ENCODE measurements at regions of chr4 and their contacts with region 1.

Region 1: DNA sequence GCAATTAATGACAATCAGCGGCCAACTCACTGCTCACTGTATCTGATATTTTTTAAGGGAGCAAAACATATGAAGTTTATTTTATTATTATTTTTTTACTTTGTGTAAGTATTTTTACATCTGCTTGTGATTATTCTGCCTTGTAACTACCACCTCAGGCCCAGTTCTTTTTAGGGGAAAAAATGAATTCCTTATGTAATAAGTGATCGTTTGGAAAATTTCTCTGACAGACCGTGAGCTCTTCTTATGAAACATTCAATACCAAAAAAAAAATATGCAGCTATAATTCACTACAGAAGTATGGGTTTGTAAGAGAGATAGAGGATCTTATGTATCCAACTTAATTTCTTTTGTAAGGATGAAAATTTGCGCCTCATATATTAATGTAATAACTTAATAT is 33.5 kb upstream of the STOX2 start:
- DNase-seq: no peak
- H3K4me3 ChIP-seq: no peak overlapping the region
- H3K27ac ChIP-seq: no peak overlapping the region
- H3K4me1 ChIP-seq: peaks cover 2% of the 10 kb centered on the region
- H3K27me3 ChIP-seq: no peaks in the 10 kb centered on the region
- CTCF ChIP-seq: no peak
- POLR2A ChIP-seq: no peak

Region 2: DNA sequence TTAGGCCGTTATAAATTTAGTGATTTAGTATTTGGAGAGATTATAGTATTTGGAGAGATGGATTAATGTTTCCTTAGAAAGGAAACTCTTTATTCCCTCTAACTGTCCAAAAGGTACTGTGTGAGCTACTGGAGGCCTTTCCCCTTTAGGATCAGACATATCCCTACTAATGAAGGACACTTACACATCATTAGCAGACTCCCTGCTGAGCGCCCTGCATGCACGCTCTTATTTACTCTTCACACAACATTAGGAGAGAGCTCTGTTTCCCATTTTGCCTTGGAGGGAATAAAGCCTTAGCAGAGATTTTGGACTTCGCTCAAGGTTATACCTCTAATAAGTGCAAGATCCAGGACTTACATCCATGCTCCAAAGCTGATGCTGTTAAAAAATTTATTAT is 15.8 kb after region 1 on chr4:
- CTCF ChIA-PET with region 1: no interaction called
- POLR2A ChIA-PET with region 1: no interaction called
- dilution Hi-C with region 1: no loop called
- intact Hi-C with region 1: loop called (anchors 1 kb)
- DNase-seq: no peak
- H3K4me3 ChIP-seq: no peak overlapping the region
- H3K27ac ChIP-seq: no peak overlapping the region
- H3K4me1 ChIP-seq: no peaks in the 10 kb centered on the region
- H3K27me3 ChIP-seq: no peaks in the 10 kb centered on the region
- CTCF ChIP-seq: no peak
- POLR2A ChIP-seq: no peak